ENCODE measurements at regions of chr19 and their contacts with region 1.

Region 1: DNA sequence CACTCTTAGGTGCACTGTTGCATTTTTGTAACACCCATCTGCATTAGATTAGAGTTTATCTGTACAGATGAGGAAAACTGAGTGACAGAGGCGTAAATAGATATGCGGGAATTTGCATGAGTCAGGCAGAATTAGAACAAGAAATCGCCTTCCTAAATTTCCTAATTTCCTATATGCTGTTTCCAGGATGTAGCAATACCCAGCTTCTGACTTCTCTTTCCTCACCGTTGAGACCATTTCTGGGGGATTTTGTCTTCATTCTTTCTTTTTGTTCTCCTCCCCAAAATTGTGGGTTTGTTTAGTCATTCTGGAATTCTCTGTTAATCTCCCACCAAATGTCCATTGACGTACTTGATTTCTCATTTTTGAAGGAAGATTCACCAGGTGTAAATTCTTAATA is 10.6 kb upstream of the ZNF792 start:
- DNase-seq: no peak
- ATAC-seq: no peak
- H3K4me3 ChIP-seq: no peak overlapping the region
- H3K27ac ChIP-seq: no peak overlapping the region
- H3K4me1 ChIP-seq: no peaks in the 10 kb centered on the region
- H3K27me3 ChIP-seq: peaks cover 14% of the 10 kb centered on the region
- CTCF ChIP-seq: no peak
- POLR2A ChIP-seq: no peak
- RAD21 ChIP-seq: no peak

Region 2: GRCh38 chr19:34938886-34939285 is 35.8 kb before region 1 on chr19:
- CTCF ChIA-PET with region 1: no interaction called
- POLR2A ChIA-PET with region 1: no interaction called
- dilution Hi-C with region 1: no loop called
- in situ Hi-C with region 1: no loop called
- intact Hi-C with region 1: no loop called
- DNase-seq: no peak
- ATAC-seq: no peak
- H3K4me3 ChIP-seq: no peak overlapping the region
- H3K27ac ChIP-seq: no peak overlapping the region
- H3K4me1 ChIP-seq: no peaks in the 10 kb centered on the region
- H3K27me3 ChIP-seq: no peaks in the 10 kb centered on the region
- CTCF ChIP-seq: no peak
- POLR2A ChIP-seq: no peak
- RAD21 ChIP-seq: no peak

Region 3: DNA sequence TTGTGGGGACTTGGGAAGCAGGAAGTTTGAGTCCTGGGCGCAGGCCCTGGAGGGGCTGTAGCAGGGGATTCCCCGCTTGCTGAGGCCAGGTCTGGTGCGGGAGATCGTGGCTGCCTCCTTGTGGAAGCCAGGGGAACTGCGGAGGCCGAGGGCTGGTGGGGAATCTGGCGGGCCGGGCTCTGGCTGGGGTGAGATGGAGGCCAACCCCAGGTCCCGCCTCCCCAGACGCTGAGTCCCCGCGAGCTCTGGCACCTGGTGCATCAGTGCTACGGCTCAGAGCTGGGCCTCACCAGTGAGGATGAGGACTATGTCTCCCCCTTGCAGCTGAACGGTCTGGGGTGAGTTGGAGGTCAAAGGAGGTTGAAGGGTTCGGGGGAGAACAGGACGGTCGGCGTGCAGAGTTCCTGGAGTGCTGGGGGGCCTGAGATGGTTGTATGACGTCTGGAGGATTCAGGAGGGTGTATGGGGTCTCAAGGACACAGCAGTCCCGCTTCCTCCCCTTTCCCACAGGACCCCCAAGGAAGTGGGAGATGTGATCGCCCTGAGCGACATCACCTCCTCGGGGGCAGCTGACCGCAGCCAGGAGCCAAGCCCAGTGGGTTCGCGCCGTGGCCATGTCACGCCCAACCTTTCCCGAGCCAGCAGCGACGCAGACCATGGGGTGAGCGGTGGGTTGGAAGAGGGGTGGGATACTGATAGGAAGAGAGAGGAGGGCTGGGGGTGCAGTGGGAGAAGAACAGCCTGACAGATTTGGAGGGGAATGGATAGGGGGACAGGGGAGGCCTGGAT is 38.6 kb after region 1 on chr19:
- CTCF ChIA-PET with region 1: no interaction called
- POLR2A ChIA-PET with region 1: no interaction called
- dilution Hi-C with region 1: no loop called
- in situ Hi-C with region 1: no loop called
- intact Hi-C with region 1: loop called (anchors 1 kb)
- DNase-seq: peak; percentile 57
- ATAC-seq: peak; percentile 91
- H3K4me3 ChIP-seq: no peak overlapping the region
- H3K27ac ChIP-seq: no peak overlapping the region
- H3K4me1 ChIP-seq: no peaks in the 10 kb centered on the region
- H3K27me3 ChIP-seq: no peaks in the 10 kb centered on the region
- CTCF ChIP-seq: peak; percentile 87
- POLR2A ChIP-seq: no peak
- RAD21 ChIP-seq: peak; percentile 91

Region 4: DNA sequence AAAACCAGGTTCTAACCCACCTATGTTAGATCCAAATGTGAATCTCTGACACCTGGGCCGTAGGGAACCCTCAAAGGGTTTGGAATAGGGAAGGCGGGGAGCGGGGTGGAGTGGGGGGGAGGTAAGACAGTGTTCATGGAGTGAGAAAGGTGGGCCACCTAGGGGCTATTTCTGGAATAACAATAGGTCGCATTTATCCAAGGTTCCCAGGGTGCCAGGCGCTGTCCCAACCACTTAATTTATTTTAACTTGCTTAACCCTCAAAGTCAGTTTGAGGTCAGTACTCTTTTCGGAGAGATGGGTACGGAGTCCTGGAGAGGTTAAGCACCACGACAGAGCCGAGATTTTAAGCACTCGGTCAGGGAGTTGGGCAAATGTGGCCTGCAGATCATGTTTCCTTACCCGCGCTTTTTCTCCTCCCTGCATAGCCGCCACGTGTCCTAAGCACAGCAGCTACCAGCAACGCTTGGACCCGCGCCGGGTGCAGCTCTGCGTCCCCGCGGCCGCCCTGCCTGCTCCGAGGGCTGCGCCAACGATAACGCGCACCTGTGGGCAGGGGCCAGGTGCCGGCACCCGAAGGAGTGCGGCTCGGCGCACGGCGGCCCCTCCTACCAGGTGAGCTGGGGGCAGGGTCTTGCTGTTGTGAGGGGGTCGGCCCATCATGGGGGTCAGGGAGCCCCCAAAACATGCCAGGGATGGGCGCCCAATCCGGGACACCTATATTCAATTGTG is 116.0 kb after region 1 on chr19:
- CTCF ChIA-PET with region 1: no interaction called
- POLR2A ChIA-PET with region 1: no interaction called
- dilution Hi-C with region 1: no loop called
- in situ Hi-C with region 1: no loop called
- intact Hi-C with region 1: loop called (anchors 1 kb)
- DNase-seq: peak; percentile 53
- ATAC-seq: peak; percentile 79
- H3K4me3 ChIP-seq: no peak overlapping the region
- H3K27ac ChIP-seq: no peak overlapping the region
- H3K4me1 ChIP-seq: peaks cover 3% of the 10 kb centered on the region
- H3K27me3 ChIP-seq: peaks cover 3% of the 10 kb centered on the region; the same call in 1 of the 2 replicates
- CTCF ChIP-seq: peak; percentile 66
- POLR2A ChIP-seq: no peak
- RAD21 ChIP-seq: peak; percentile 64

Region 5: DNA sequence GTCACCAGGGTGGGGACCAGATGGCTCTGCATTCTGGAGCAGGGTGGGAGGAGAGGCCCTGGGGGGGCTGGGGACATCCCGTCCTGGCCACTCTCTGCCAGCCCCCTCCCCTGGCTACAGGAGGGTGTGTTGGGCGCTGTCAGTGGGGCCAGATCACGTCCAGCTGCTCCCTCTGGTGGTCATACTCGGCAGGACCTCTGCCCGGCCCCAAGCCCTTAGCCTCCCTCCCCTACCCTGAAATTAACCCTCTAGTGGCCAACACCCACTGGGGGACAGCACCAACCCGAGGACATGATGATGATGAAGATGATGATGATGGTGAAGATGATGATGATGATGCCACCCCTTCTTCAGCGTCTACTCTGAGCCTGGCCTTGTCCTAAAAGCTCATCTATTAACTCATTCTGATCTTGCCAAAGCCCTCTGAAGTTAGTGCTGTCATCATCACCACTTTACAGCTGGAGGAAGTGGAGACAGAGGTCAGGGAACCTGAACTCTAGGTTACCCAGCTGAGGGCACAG is 160.8 kb after region 1 on chr19:
- CTCF ChIA-PET with region 1: no interaction called
- POLR2A ChIA-PET with region 1: no interaction called
- dilution Hi-C with region 1: no loop called
- in situ Hi-C with region 1: no loop called
- intact Hi-C with region 1: loop called (anchors 1 kb)
- DNase-seq: peak; percentile 55
- ATAC-seq: peak; percentile 89
- H3K4me3 ChIP-seq: no peak overlapping the region
- H3K27ac ChIP-seq: no peak overlapping the region
- H3K4me1 ChIP-seq: peaks cover 14% of the 10 kb centered on the region
- H3K27me3 ChIP-seq: peaks cover 14% of the 10 kb centered on the region; the same call in 1 of the 2 replicates
- CTCF ChIP-seq: peak; percentile 82
- POLR2A ChIP-seq: no peak
- RAD21 ChIP-seq: peak; percentile 67

Measured in IMR-90 (cell line).